Naive thymus-derived CD4-positive, alpha-beta T cell (primary cell): ENCODE measurements at regions of chr17 and their contacts with region 1.

Region 1: GRCh38 chr17:73645050-73645978 is 1.1 kb upstream of the SDK2 start:
- DNase-seq: peak in 7 of 9 donors; percentile 45 to 58 (median 49)
- ATAC-seq: peak; percentile 72
- H3K4me3 ChIP-seq: no peak overlapping the region
- H3K4me3 Mint-ChIP-seq: peak overlapping the region; percentile 45 to 95 (median 72)
- H3K27ac ChIP-seq: no peak overlapping the region
- H3K27ac Mint-ChIP-seq: no peak overlapping the region
- H3K4me1 ChIP-seq: peaks cover 0 to 13% of the 10 kb centered on the region in 2 donors
- H3K4me1 Mint-ChIP-seq: peaks cover 19 to 38% (median 25%) of the 10 kb centered on the region in 7 donors
- H3K27me3 ChIP-seq: no peaks in the 10 kb centered on the region
- H3K27me3 Mint-ChIP-seq: peaks cover 0 to 75% (median 5%) of the 10 kb centered on the region in 5 donors

Region 2: GRCh38 chr17:73566905-73567782 is 78.2 kb before region 1 on chr17:
- CTCF ChIA-PET with region 1: no interaction called
- POLR2A ChIA-PET with region 1: no interaction called
- intact Hi-C with region 1: loop called in 1 of 2 experiments (anchors 2 kb)
- DNase-seq: peak in 6 of 9 donors; percentile 42 to 61 (median 53)
- ATAC-seq: peak; percentile 77
- H3K4me3 ChIP-seq: no peak overlapping the region
- H3K4me3 Mint-ChIP-seq: peak overlapping the region in 9 of 10 donors; percentile 15 to 69 (median 48)
- H3K27ac ChIP-seq: peak overlapping the region; percentile 61
- H3K27ac Mint-ChIP-seq: peak overlapping the region; percentile 29 to 92 (median 89)
- H3K4me1 ChIP-seq: peaks cover 7 to 9% of the 10 kb centered on the region in 2 donors
- H3K4me1 Mint-ChIP-seq: peaks cover 9 to 33% (median 27%) of the 10 kb centered on the region in 7 donors
- H3K27me3 ChIP-seq: no peaks in the 10 kb centered on the region
- H3K27me3 Mint-ChIP-seq: peaks cover 0 to 5% (median 0%) of the 10 kb centered on the region in 5 donors

Region 3: GRCh38 chr17:73600103-73600871 is 45.0 kb before region 1 on chr17:
- CTCF ChIA-PET with region 1: no interaction called
- POLR2A ChIA-PET with region 1: no interaction called
- intact Hi-C with region 1: no loop called
- DNase-seq: no peak
- ATAC-seq: no peak
- H3K4me3 ChIP-seq: no peak overlapping the region
- H3K4me3 Mint-ChIP-seq: no peak overlapping the region
- H3K27ac ChIP-seq: no peak overlapping the region
- H3K27ac Mint-ChIP-seq: peak overlapping the region in 2 of 9 donors; percentile 14 to 52
- H3K4me1 ChIP-seq: peaks cover 0 to 10% of the 10 kb centered on the region in 2 donors
- H3K4me1 Mint-ChIP-seq: peaks cover 2 to 33% (median 20%) of the 10 kb centered on the region in 7 donors
- H3K27me3 ChIP-seq: no peaks in the 10 kb centered on the region
- H3K27me3 Mint-ChIP-seq: no peaks in the 10 kb centered on the region

Region 4: GRCh38 chr17:73630965-73631595 is 14.2 kb before region 1 on chr17:
- CTCF ChIA-PET with region 1: no interaction called
- POLR2A ChIA-PET with region 1: no interaction called
- intact Hi-C with region 1: loop called in 1 of 2 experiments (anchors 1 kb)
- DNase-seq: no peak
- ATAC-seq: no peak
- H3K4me3 ChIP-seq: no peak overlapping the region
- H3K4me3 Mint-ChIP-seq: no peak overlapping the region
- H3K27ac ChIP-seq: no peak overlapping the region
- H3K27ac Mint-ChIP-seq: peak overlapping the region in 2 of 9 donors; percentile 23 to 48
- H3K4me1 ChIP-seq: no peaks in the 10 kb centered on the region
- H3K4me1 Mint-ChIP-seq: peaks cover 0 to 11% (median 5%) of the 10 kb centered on the region in 7 donors
- H3K27me3 ChIP-seq: no peaks in the 10 kb centered on the region
- H3K27me3 Mint-ChIP-seq: peaks cover 0 to 2% (median 0%) of the 10 kb centered on the region in 5 donors

Region 5: GRCh38 chr17:73782641-73783381 is 137.5 kb after region 1 on chr17:
- CTCF ChIA-PET with region 1: no interaction called
- POLR2A ChIA-PET with region 1: no interaction called
- intact Hi-C with region 1: loop called in 1 of 2 experiments (anchors 5 kb)
- DNase-seq: peak in 3 of 9 donors; percentile 8 to 26 (median 9)
- ATAC-seq: peak; percentile 10
- H3K4me3 ChIP-seq: no peak overlapping the region
- H3K4me3 Mint-ChIP-seq: peak overlapping the region in 2 of 10 donors; percentile 6 to 16
- H3K27ac ChIP-seq: no peak overlapping the region
- H3K27ac Mint-ChIP-seq: peak overlapping the region in 5 of 9 donors; percentile 22 to 84 (median 61)
- H3K4me1 ChIP-seq: peaks cover 0 to 7% of the 10 kb centered on the region in 2 donors
- H3K4me1 Mint-ChIP-seq: peaks cover 0 to 22% (median 12%) of the 10 kb centered on the region in 7 donors
- H3K27me3 ChIP-seq: no peaks in the 10 kb centered on the region
- H3K27me3 Mint-ChIP-seq: peaks cover 0 to 2% (median 0%) of the 10 kb centered on the region in 5 donors

Region 6: DNA sequence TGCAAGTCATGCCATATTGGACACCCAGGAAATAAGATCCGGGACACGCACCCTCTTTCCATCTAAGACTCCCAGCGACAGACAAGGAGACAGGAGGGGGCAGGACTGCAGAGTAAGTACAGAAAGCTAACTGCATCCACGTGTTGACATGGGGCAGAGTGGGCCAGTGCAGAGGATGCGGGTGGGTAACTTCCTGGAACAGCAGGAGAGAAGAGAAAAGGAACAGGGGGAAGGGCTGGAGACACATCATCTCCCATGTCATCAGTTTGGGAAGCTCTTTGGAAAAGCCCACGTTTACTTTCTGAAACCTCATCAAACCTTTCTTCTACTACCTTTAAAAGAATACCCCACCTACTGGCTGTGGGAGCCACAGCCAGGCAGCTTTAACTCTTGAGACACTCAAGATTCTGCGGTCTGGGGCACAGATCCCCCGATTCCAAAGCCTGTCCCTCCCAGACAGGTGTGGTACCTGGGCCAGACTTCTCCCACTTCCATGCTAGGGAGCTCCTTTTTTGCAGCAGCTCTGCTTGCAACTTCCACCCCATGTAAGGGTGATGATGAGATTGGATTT is 284.6 kb after region 1 on chr17:
- CTCF ChIA-PET with region 1: no interaction called
- POLR2A ChIA-PET with region 1: no interaction called
- intact Hi-C with region 1: loop called in 1 of 2 experiments (anchors 1 kb)
- DNase-seq: no peak
- ATAC-seq: no peak
- H3K4me3 ChIP-seq: no peak overlapping the region
- H3K4me3 Mint-ChIP-seq: no peak overlapping the region
- H3K27ac ChIP-seq: no peak overlapping the region
- H3K27ac Mint-ChIP-seq: peak overlapping the region in 2 of 9 donors; percentile 8 to 18
- H3K4me1 ChIP-seq: no peaks in the 10 kb centered on the region
- H3K4me1 Mint-ChIP-seq: peaks cover 0 to 5% (median under 1%) of the 10 kb centered on the region in 7 donors
- H3K27me3 ChIP-seq: no peaks in the 10 kb centered on the region
- H3K27me3 Mint-ChIP-seq: peaks cover 0 to 14% (median 5%) of the 10 kb centered on the region in 5 donors

Region 7: DNA sequence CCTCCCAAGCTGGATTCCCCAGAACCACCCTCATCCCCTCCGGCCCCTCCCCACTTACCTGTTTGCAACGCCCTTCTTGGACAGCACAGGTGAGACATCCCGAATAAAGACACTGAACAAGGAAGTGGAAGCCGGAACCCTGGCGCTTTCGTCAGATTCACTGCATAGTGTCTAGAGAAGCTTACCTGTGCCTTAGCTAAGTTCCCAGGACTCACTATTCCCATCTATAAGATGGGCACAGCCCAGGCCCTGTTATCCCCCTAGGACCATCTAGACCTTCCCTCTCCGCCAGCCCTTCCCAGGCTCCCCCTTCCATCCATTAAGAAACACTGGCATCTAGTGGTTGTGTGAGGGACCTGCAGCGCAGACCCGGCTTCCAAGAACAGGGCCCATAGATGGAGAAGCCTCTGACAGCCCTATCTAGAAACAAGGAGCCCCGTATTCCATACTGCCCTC is 531.3 kb after region 1 on chr17:
- CTCF ChIA-PET with region 1: no interaction called
- POLR2A ChIA-PET with region 1: no interaction called
- intact Hi-C with region 1: loop called in 1 of 2 experiments (anchors 2 kb)
- DNase-seq: peak in 6 of 9 donors; percentile 13 to 32 (median 22)
- ATAC-seq: peak; percentile 56
- H3K4me3 ChIP-seq: no peak overlapping the region
- H3K4me3 Mint-ChIP-seq: no peak overlapping the region
- H3K27ac ChIP-seq: no peak overlapping the region
- H3K27ac Mint-ChIP-seq: no peak overlapping the region
- H3K4me1 ChIP-seq: no peaks in the 10 kb centered on the region
- H3K4me1 Mint-ChIP-seq: peaks cover 0 to 3% (median 0%) of the 10 kb centered on the region in 7 donors
- H3K27me3 ChIP-seq: no peaks in the 10 kb centered on the region
- H3K27me3 Mint-ChIP-seq: peaks cover 12 to 33% (median 27%) of the 10 kb centered on the region in 5 donors

Region 8: DNA sequence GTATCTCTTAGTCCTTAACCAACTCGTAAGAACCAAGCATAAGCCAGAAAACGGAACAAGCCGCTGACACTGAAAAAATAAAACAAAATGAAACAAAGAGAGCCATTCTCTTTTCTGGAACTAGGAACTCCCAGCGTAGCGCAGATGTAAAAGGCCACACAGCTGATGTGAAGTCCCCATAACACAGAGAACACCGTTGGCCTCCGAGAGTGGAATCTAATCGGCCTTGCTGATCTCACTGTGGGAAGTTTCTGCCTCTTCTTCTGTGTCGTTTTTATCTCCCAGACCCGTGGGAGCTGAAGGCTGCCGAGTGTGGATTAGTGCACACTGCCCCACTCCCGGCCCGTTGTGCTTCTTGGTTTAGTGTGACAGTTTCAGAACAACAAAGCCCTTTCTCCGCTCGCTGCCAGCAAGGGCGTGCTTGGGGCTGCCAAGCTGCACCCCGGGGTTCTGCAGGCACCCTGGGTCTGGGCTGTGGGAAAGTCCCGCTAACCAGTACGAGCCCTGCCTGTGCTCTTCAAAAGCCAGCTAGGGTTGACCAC is 589.8 kb after region 1 on chr17:
- CTCF ChIA-PET with region 1: no interaction called
- POLR2A ChIA-PET with region 1: no interaction called
- intact Hi-C with region 1: no loop called
- DNase-seq: no peak
- ATAC-seq: peak; percentile 46
- H3K4me3 ChIP-seq: no peak overlapping the region
- H3K4me3 Mint-ChIP-seq: no peak overlapping the region
- H3K27ac ChIP-seq: no peak overlapping the region
- H3K27ac Mint-ChIP-seq: peak overlapping the region in 2 of 9 donors; percentile 41 to 48
- H3K4me1 ChIP-seq: no peaks in the 10 kb centered on the region
- H3K4me1 Mint-ChIP-seq: no peaks in the 10 kb centered on the region
- H3K27me3 ChIP-seq: no peaks in the 10 kb centered on the region
- H3K27me3 Mint-ChIP-seq: no peaks in the 10 kb centered on the region